Sciatic nerve (tissue), 2 donors: ENCODE measurements at regions of chr15 and their contacts with region 1.

Region 1: GRCh38 chr15:44663409-44664308 is at the start of gene SPG11:
- DNase-seq: peak; percentile 99
- ATAC-seq: peak; percentile 99
- total RNA-seq, gene SPG11: 88.0 TPM

Region 2: DNA sequence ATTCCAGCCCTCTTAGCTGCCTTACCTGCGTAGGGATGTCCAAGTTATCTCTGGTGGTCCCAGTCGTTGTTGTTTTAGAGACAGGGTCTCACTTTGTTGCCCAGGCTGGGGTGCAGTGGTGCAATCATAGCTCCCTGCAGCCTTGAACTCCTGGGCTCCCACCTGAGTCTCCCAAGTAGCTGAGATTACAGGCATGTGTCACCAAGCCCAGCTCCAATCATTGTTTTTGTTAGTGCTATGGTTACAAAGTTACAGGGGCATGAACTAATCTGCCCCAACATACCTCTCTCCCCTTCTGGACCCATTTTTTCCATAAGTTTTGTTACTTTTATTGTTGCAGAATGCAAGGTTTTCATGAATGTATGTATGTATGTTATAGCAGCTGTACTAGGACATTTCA is 181.6 kb before region 1 on chr15:
- intact Hi-C with region 1: no loop called
- DNase-seq: no peak
- ATAC-seq: no peak

Region 3: DNA sequence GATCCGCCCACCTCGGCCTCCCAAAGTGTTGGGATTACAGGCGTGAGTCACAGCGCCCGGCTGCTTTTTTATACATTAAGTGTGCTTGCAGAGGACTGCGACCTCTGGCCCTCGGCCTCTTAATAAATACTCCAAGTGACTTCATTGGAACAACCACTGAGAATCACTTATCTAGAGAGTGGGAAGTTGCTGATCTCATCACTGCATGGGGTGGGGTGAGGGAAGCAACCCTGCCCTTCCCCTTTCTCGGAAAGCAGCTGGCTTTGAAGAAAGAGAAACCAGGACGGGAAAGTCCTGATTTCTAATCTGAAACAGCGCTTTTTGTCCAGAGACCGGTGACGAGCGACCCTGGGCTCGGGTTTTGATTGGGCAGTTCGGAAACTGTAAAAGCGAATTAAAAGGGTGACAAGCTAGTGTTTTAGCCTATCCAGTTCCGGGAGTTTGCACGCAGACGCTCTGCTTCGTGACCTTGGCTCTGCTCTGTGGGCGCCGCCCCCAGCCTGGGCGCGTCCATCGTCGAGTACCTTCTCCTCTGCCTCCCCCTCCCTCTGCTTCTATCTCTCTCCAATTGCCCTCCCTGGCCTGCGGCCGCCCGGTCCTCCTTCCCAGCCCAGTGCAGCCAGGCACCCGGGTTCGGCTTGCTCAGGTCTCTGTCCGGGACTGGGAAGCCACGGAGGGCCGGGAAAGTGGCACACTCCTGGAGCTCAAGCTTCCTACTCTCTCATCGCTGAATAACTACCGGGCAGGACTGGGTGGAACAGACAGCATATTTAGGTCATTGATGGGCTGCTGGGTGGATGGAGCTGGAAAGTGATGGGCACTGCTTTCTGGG is 65.1 kb after region 1 on chr15:
- intact Hi-C with region 1: loop called (anchors 2 kb)
- DNase-seq: peak; percentile 95
- ATAC-seq: peak; percentile 98